ENCODE measurements at regions of chr16 and their contacts with region 1.

Region 1: GRCh38 chr16:29700253-29700987 is 21.4 kb downstream of the QPRT start:
- DNase-seq: peak; percentile 68 to 85 (median 74)
- ATAC-seq: peak; percentile 58 to 88 (median 85)
- H3K4me3 ChIP-seq: no peak overlapping the region
- H3K27ac ChIP-seq: no peak overlapping the region
- H3K4me1 ChIP-seq: peaks cover 0 to 7% (median 0%) of the 10 kb centered on the region in 12 donors
- H3K27me3 ChIP-seq: no peaks in the 10 kb centered on the region
- CTCF ChIP-seq: peak; percentile 86 to 94 (median 88)
- POLR2A ChIP-seq: no peak

Region 2: GRCh38 chr16:28211712-28212534 is 1488.5 kb before region 1 on chr16 and contains the start of gene XPO6:
- intact Hi-C with region 1: no loop called
- DNase-seq: peak; percentile 96 to 98 (median 96)
- ATAC-seq: peak; percentile 92 to 97 (median 95)
- H3K4me3 ChIP-seq: peak within 1 kb of the TSS; percentile 48 to 89 (median 78)
- H3K27ac ChIP-seq: peak within 1 kb of the TSS; percentile 57 to 93 (median 88)
- H3K4me1 ChIP-seq: peaks cover 0 to 32% (median 15%) of the 10 kb centered on the region in 12 donors
- H3K27me3 ChIP-seq: no peaks in the 10 kb centered on the region
- CTCF ChIP-seq: no peak
- POLR2A ChIP-seq: peak in 1 of 2 donors; percentile 60
- total RNA-seq, gene XPO6: 19.8 to 78.0 (median 33.0) TPM

Region 3: DNA sequence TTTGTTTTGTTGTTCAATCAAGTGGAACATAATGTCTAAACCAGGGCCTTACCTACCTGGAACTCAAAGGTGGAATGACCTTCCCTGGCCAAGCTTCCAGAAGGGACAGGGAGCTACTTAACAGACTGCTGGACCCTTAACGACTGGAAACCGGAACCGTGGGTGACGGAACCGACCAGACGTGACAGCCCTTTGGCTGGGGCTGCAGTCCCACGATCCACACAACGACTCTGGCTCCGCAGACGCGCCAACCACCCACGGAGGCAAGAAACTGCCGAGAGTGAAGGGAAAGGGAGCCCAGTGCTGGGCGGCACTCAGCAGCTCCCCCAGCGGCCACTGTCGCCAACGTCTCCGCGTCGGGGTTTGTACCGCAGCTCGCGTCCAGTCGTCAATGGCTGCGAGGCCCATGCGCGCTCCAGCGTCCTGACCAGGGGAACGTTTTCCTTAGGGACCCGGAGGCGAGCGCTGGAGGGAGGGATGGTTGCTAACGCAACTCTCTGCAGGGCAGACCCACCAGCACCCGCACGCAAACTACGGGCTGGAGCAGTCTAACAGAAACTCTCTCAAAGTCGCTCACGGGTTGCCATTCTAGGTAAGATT is 84.6 kb after region 1 on chr16:
- intact Hi-C with region 1: loop called in 1 of 10 experiments (anchors 5 kb)
- DNase-seq: peak; percentile 77 to 92 (median 81)
- ATAC-seq: peak; percentile 60 to 95 (median 91)
- H3K4me3 ChIP-seq: peak overlapping the region in 10 of 12 donors; percentile 6 to 46 (median 35)
- H3K27ac ChIP-seq: peak overlapping the region in 2 of 12 donors; percentile 19 to 49
- H3K4me1 ChIP-seq: peaks cover 0 to 19% (median 10%) of the 10 kb centered on the region in 12 donors
- H3K27me3 ChIP-seq: peaks cover 0 to 1% (median 0%) of the 10 kb centered on the region in 9 donors
- CTCF ChIP-seq: peak; percentile 70 to 94 (median 84)
- POLR2A ChIP-seq: no peak

Region 4: GRCh38 chr16:29848420-29849297 is 148.2 kb after region 1 on chr16:
- intact Hi-C with region 1: loop called in 3 of 10 experiments (anchors 5 to 10 kb)
- DNase-seq: peak; percentile 64 to 90 (median 79)
- ATAC-seq: peak; percentile 60 to 79 (median 78)
- H3K4me3 ChIP-seq: no peak overlapping the region
- H3K27ac ChIP-seq: no peak overlapping the region
- H3K4me1 ChIP-seq: peaks cover 0 to 7% (median 0%) of the 10 kb centered on the region in 12 donors
- H3K27me3 ChIP-seq: no peaks in the 10 kb centered on the region
- CTCF ChIP-seq: peak; percentile 82 to 93 (median 87)
- POLR2A ChIP-seq: no peak

Region 5: DNA sequence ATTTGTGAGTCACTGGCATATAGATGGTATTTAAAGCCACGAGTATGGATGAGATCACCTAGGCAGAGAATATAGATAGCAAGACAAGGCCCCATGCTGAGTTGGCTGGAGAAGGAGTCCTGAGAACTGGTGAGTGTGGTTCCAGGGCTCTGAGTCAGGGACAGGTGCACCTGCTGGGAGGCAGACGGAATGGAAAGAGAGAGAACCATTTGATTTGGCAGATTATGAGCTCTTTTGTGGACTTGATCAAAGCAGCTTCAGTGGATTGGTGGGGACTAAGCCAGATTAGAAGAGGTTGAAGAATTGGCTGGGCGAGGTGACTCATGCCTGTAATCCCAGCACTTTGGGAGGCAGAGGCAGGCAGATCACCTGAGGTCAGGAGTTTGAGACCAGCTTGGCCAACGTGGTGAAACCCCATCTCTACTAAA is 318.3 kb after region 1 on chr16:
- intact Hi-C with region 1: loop called (anchors 1 to 10 kb)
- DNase-seq: peak in 1 of 5 donors; percentile 0
- ATAC-seq: no peak
- H3K4me3 ChIP-seq: no peak overlapping the region
- H3K27ac ChIP-seq: no peak overlapping the region
- H3K4me1 ChIP-seq: peaks cover 0 to 13% (median 4%) of the 10 kb centered on the region in 12 donors
- H3K27me3 ChIP-seq: no peaks in the 10 kb centered on the region
- CTCF ChIP-seq: no peak
- POLR2A ChIP-seq: no peak

Region 6: GRCh38 chr16:30032083-30032819 is 331.8 kb after region 1 on chr16:
- intact Hi-C with region 1: loop called in 1 of 10 experiments (anchors 10 kb)
- DNase-seq: no peak
- ATAC-seq: peak in 1 of 4 donors; percentile 29
- H3K4me3 ChIP-seq: no peak overlapping the region
- H3K27ac ChIP-seq: no peak overlapping the region
- H3K4me1 ChIP-seq: peaks cover 0 to 11% (median 0%) of the 10 kb centered on the region in 12 donors
- H3K27me3 ChIP-seq: peaks cover 25 to 86% (median 67%) of the 10 kb centered on the region in 9 donors
- CTCF ChIP-seq: peak; percentile 38 to 63 (median 54)
- POLR2A ChIP-seq: no peak